ENCODE measurements at regions of chrX and their contacts with region 1.

Region 1: GRCh38 chrX:37755025-37755424 is 24.8 kb upstream of the CYBB start:
- DNase-seq: peak; percentile 77
- ATAC-seq: peak; percentile 95
- H3K4me3 ChIP-seq: peak overlapping the region in 1 of 5 experiments; percentile 39
- H3K4me3 Mint-ChIP-seq: no peak overlapping the region
- H3K27ac ChIP-seq: peak overlapping the region; percentile 57 to 75
- H3K27ac Mint-ChIP-seq: no peak overlapping the region
- H3K4me1 ChIP-seq: peaks cover 63 to 73% of the 10 kb centered on the region in 2 donors
- H3K4me1 Mint-ChIP-seq: peaks cover 22% of the 10 kb centered on the region
- H3K27me3 ChIP-seq: no peaks in the 10 kb centered on the region
- H3K27me3 Mint-ChIP-seq: no peaks in the 10 kb centered on the region
- CTCF ChIP-seq: no peak

Region 2: GRCh38 chrX:37776283-37776986 is 21.4 kb after region 1 on chrX:
- CTCF ChIA-PET with region 1: interaction called, 6 read pairs
- POLR2A ChIA-PET with region 1: interaction called, 4 read pairs
- intact Hi-C with region 1: loop called (anchors 2 kb)
- DNase-seq: peak; percentile 50
- ATAC-seq: peak; percentile 66
- H3K4me3 ChIP-seq: peak overlapping the region in 1 of 5 experiments; percentile 9
- H3K4me3 Mint-ChIP-seq: peak overlapping the region; percentile 60
- H3K27ac ChIP-seq: peak overlapping the region; percentile 84
- H3K27ac Mint-ChIP-seq: peak overlapping the region; percentile 89
- H3K4me1 ChIP-seq: peaks cover 29 to 36% of the 10 kb centered on the region in 2 donors
- H3K4me1 Mint-ChIP-seq: peaks cover 34% of the 10 kb centered on the region
- H3K27me3 ChIP-seq: no peaks in the 10 kb centered on the region
- H3K27me3 Mint-ChIP-seq: no peaks in the 10 kb centered on the region
- CTCF ChIP-seq: no peak